IMR-90 (cell line): ENCODE measurements at regions of chr16 and their contacts with region 1.

Region 1: DNA sequence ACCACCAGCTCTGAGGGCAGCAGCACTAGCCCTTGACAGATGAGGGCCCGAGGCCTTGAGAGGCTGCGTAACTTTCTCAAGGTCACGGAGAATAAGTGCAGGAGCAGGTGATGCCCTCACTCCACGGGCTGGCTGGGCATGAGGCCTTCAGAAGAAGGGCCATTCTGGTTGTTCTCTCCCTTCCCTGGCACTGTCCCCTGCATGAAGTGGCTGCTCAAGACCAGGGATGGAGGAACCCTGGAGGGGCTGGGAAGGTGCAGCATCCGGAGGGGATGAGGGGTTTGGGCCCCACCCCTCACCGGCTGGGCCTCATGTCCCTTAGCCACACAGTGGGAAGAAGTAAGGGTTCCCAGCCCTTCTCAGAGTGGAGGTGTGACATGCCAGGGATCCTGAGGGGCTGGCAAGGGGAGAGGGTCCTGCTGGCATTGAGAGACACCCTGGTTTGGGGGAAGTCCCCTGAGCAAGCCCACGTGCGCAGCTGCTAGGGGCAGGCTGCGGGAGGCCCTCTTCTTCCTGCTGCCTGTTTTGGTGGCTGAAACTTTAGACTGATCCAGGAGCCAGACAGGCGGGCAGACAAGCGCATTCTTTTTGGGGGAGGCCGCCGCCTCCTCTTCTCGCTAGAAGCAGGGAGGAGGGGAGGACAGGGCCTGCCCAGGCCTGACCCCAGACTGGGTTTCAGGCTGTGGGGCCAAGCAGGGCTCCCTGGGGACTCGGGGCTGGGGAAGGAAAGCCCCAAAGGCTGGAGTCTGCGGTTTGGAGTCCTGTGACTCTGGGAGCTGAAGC is 74.0 kb downstream of the N4BP1 start:
- DNase-seq: peak; percentile 31
- ATAC-seq: peak; percentile 83
- H3K4me3 ChIP-seq: no peak overlapping the region
- H3K27ac ChIP-seq: peak overlapping the region; percentile 51
- H3K4me1 ChIP-seq: peaks cover 21% of the 10 kb centered on the region
- H3K27me3 ChIP-seq: no peaks in the 10 kb centered on the region
- CTCF ChIP-seq: no peak
- POLR2A ChIP-seq: no peak
- RAD21 ChIP-seq: no peak

Region 2: DNA sequence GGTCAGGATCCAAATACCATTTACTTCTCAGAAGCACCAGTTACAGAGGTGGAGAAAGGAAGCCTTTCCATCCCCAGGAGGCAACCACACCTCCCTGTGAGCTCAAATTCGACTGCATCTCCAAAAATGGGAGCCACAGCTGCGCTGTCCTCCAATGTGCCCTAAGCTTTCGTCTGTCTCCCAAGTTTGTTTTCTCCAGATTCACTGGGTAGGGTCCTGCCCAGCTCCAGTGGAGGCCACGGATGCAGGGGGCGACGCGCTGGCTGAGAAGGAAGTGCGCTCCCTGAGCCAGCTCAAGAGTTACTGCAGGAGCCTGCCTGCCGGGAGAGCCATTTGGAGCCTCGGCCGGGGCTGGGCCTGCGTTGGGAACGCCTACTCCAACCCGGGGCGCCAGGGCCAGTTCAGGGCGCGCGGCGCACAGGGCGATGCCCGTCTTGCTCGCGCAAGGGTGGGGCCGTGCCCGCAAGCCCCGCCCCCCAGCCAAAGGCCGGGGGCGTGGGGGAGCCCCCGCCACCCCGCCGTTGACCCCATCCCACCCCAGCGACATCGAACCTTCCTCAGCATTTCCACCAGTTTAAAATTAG is 170.3 kb before region 1 on chr16:
- CTCF ChIA-PET with region 1: no interaction called
- POLR2A ChIA-PET with region 1: no interaction called
- dilution Hi-C with region 1: no loop called
- in situ Hi-C with region 1: no loop called
- intact Hi-C with region 1: loop called (anchors 5 kb)
- DNase-seq: peak; percentile 80
- ATAC-seq: peak; percentile 99
- H3K4me3 ChIP-seq: peak overlapping the region; percentile 50
- H3K27ac ChIP-seq: peak overlapping the region; percentile 84
- H3K4me1 ChIP-seq: peaks cover 13% of the 10 kb centered on the region
- H3K27me3 ChIP-seq: no peaks in the 10 kb centered on the region
- CTCF ChIP-seq: no peak
- POLR2A ChIP-seq: peak; percentile 77
- RAD21 ChIP-seq: no peak

Region 3: DNA sequence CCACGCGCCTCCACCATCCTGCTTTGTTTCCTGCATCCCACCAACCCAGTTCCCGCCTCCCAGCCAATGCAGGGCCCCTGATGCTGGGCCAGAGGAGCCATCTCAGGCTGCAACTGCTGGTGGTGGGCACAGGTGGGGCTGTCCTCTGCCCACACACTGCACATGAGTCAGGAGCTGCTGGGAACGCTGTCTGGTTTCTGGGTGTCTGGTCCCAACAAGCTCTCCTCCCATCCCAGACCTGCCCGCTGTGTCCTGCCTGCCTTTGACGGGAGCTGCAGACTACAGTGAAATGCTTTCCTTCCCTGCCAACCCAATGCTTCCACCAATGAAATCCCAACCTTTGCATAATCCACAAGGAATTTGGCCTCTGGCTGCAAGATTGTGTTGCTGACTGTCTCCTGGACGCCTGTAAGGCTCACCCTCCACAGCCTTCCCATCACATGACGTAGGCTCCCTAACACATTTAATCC is 24.9 kb before region 1 on chr16:
- CTCF ChIA-PET with region 1: no interaction called
- POLR2A ChIA-PET with region 1: no interaction called
- dilution Hi-C with region 1: no loop called
- in situ Hi-C with region 1: no loop called
- intact Hi-C with region 1: no loop called
- DNase-seq: peak; percentile 68
- ATAC-seq: peak; percentile 97
- H3K4me3 ChIP-seq: no peak overlapping the region
- H3K27ac ChIP-seq: no peak overlapping the region
- H3K4me1 ChIP-seq: peaks cover 5% of the 10 kb centered on the region; the same call in 1 of the 2 replicates
- H3K27me3 ChIP-seq: peaks cover 3% of the 10 kb centered on the region; the same call in 1 of the 2 replicates
- CTCF ChIP-seq: no peak
- POLR2A ChIP-seq: no peak
- RAD21 ChIP-seq: no peak